Dorsolateral prefrontal cortex (tissue), 120 donors: ENCODE measurements at regions of chr6 and their contacts with region 1.

Region 1: DNA sequence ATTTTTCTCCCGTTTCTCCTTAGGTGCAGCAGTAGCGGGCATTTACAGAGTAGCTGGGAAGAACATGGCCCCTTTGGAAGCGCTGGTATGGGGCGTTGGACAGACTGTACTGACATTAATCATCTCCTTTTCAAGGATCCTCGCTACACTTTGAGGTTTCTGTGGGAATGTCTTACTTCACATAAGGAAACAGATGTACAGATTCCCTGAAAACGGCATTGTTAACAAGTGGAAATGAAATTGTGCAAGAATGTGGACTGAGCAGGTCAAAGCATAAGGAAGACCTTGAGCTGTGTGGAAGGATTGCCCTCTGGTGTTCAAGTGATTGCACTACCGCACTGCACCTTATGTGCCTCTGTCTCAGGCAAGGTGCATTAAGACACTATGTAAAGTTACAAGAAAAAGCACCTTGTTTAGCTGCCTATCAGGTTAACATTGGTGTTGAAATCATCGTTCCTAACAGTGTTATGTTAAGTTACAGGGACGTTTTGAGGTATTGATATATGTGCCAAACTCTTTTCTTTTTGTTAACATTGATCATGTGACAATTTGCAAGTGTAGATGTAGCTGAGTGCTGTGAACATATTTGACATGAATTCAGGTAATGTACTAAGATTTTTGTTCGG is 38.0 kb downstream of the TMEM170B start:
- DNase-seq: peak in 7 of 10 donors; percentile 34 to 66 (median 51)
- H3K4me3 ChIP-seq: peak overlapping the region in 2 of 59 donors; percentile 12 to 14
- H3K27ac ChIP-seq: peak overlapping the region in 1 of 59 donors; percentile 37
- H3K27me3 ChIP-seq: no peaks in the 10 kb centered on the region
- CTCF ChIP-seq: peak; percentile 53 to 92 (median 84)

Region 2: DNA sequence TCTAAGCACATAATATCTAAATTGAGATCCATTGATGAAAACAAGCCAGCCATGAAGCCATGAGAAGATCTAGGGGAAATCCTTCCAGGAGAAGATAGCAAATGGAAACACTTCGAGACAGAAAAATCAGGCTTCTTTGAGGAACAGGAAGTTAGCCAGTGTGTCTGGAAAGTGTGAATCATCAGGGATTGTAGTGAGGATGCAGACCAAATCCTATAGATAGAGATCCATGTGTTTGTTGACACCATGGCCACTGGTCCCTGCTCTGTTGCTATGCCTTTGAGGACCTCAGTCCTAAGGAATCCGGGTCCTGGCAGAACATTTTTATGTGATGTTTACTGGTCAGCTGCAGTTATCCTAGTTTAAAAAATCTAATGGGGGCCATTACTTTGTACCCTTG is 524.8 kb before region 1 on chr6:
- intact Hi-C with region 1: no loop called
- DNase-seq: no peak
- H3K4me3 ChIP-seq: no peak overlapping the region
- H3K27ac ChIP-seq: no peak overlapping the region
- H3K27me3 ChIP-seq: peaks cover 0 to 45% (median 15%) of the 10 kb centered on the region in 45 donors
- CTCF ChIP-seq: no peak

Region 3: GRCh38 chr6:11232193-11232769 is 343.2 kb before region 1 on chr6 and contains the start of gene NEDD9:
- intact Hi-C with region 1: loop called in 1 of 2 experiments (anchors 10 kb)
- DNase-seq: peak; percentile 74 to 97 (median 93)
- H3K4me3 ChIP-seq: peak within 1 kb of the TSS; percentile 41 to 91 (median 69)
- H3K27ac ChIP-seq: peak within 1 kb of the TSS in 57 of 59 donors; percentile 13 to 92 (median 74)
- H3K27me3 ChIP-seq: no peaks in the 10 kb centered on the region
- CTCF ChIP-seq: peak in 26 of 56 donors; percentile 4 to 40 (median 22)
- total RNA-seq, gene NEDD9: 7.7 to 36.0 (median 17.1) TPM

Region 4: GRCh38 chr6:11537229-11538051 is 38.1 kb before region 1 on chr6 and contains the start of gene TMEM170B:
- intact Hi-C with region 1: loop called in 1 of 2 experiments (anchors 5 kb)
- DNase-seq: peak; percentile 93 to 97 (median 96)
- H3K4me3 ChIP-seq: peak within 1 kb of the TSS; percentile 70 to 99 (median 92)
- H3K27ac ChIP-seq: peak within 1 kb of the TSS; percentile 0 to 97 (median 91)
- H3K27me3 ChIP-seq: no peaks in the 10 kb centered on the region
- CTCF ChIP-seq: peak in 21 of 56 donors; percentile 2 to 64 (median 27)
- total RNA-seq, gene TMEM170B: 19.1 to 53.1 (median 33.6) TPM

Region 5: GRCh38 chr6:11912426-11912825 is 336.9 kb after region 1 on chr6:
- intact Hi-C with region 1: no loop called
- DNase-seq: no peak
- H3K4me3 ChIP-seq: no peak overlapping the region
- H3K27ac ChIP-seq: no peak overlapping the region
- H3K27me3 ChIP-seq: no peaks in the 10 kb centered on the region
- CTCF ChIP-seq: no peak